CD4-positive, alpha-beta T cell (primary cell): ENCODE measurements at regions of chr1 and their contacts with region 1.

Region 1: DNA sequence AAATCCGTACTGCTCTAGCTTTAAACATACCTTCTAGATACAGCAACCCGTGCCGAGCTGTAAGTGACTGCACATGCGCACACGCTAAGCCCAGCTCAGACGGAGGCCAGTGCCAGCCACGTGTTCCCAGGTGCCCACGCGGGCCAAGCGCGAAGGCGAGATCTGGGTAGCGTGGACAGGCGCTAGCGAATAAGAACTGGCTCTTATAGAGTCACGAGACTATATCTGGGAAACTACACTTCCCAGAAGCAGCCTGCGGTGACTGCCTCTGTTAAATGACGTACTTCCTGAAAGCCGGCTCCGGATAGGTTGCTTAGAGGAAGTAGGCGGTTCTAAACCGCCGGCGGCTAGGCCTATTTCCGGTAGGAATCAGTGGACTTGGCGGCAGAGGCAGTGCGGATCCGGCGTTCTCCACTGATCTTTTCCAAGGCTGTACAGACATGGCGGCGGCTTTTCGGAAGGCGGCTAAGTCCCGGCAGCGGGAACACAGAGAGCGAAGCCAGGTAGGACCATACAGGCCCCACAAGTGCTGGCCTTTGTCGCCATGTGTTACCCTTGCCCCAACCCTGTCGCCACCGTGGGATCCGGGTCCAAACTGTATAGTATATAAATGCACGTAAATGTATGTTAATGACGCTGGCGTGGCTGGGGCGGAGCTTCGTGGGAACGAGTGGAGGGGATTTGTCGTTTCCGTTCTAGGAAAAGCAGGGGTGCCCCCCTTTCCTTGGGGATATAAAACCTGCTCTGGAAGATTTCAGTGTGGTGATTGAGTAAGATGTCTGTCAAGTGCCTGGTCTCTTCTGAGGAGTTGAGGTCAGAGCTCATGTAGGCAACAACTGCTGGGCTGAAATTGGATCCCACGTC is at the start of gene UTP11:
- DNase-seq: peak; percentile 80 to 97 (median 85)
- ATAC-seq: peak; percentile 94
- H3K4me3 ChIP-seq: peak within 1 kb of the TSS; percentile 86
- H3K4me3 Mint-ChIP-seq: peak within 1 kb of the TSS; percentile 99
- H3K27ac ChIP-seq: peak within 1 kb of the TSS; percentile 75 to 83
- H3K27ac Mint-ChIP-seq: peak within 1 kb of the TSS; percentile 97
- H3K4me1 ChIP-seq: peaks cover 47% of the 10 kb centered on the region
- H3K4me1 Mint-ChIP-seq: peaks cover 39% of the 10 kb centered on the region
- H3K27me3 ChIP-seq: no peaks in the 10 kb centered on the region
- H3K27me3 Mint-ChIP-seq: no peaks in the 10 kb centered on the region
- CTCF ChIP-seq: no peak
- total RNA-seq, gene UTP11: 8.7 to 9.4 TPM

Region 2: DNA sequence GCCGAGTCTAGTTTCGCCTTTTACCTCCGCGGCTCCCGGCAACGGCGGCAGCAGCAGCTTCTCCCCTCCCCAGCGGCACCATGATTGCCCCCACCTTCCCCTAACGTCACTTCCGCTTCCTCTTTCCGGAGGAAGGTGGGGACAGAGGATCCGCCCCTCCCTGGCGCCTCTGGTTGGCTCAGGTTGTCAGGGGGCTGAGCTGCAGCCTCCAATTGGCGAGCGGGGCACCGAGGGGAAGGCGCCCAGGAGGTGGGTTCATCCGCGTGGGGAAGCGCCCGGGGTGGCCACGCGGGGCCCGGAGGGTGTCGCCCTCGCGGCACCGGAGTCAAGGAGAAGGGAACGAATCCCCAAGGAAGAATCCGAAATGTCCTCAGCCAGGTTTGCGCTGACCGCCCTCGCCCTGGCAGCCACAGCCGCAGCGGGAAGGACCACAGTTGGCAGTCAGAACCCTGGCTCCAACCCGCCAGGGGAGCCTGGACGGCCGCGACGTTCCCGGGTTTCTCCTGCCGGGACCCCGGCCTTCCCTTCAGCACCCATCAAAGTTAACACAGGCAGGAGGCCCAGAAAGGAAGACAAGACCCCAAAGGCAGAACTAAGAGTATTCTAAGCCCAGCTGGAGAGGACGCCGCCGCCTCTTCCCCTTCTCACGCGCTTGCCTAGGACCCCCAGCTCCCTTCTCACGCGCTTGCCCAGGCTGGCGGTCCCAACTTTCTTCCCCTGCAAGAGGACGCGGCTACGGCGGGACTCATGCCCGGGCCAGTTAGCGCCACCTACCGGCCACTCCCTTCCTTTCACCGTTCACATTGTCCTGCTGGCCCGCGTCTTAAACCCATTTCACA is 152.9 kb before region 1 on chr1 and contains the start of gene MTF1:
- CTCF ChIA-PET with region 1: no interaction called
- POLR2A ChIA-PET with region 1: interaction called, 5 read pairs
- intact Hi-C with region 1: loop called in 1 of 2 experiments (anchors 2 kb)
- DNase-seq: peak; percentile 91 to 99 (median 95)
- ATAC-seq: peak; percentile 98
- H3K4me3 ChIP-seq: peak within 1 kb of the TSS; percentile 88
- H3K4me3 Mint-ChIP-seq: peak within 1 kb of the TSS; percentile 98
- H3K27ac ChIP-seq: peak within 1 kb of the TSS; percentile 81 to 91
- H3K27ac Mint-ChIP-seq: peak within 1 kb of the TSS; percentile 87
- H3K4me1 ChIP-seq: peaks cover 18% of the 10 kb centered on the region
- H3K4me1 Mint-ChIP-seq: peaks cover 41% of the 10 kb centered on the region
- H3K27me3 ChIP-seq: no peaks in the 10 kb centered on the region
- H3K27me3 Mint-ChIP-seq: no peaks in the 10 kb centered on the region
- CTCF ChIP-seq: peak; percentile 91
- total RNA-seq, gene MTF1: 28.1 to 31.2 TPM

Region 3: DNA sequence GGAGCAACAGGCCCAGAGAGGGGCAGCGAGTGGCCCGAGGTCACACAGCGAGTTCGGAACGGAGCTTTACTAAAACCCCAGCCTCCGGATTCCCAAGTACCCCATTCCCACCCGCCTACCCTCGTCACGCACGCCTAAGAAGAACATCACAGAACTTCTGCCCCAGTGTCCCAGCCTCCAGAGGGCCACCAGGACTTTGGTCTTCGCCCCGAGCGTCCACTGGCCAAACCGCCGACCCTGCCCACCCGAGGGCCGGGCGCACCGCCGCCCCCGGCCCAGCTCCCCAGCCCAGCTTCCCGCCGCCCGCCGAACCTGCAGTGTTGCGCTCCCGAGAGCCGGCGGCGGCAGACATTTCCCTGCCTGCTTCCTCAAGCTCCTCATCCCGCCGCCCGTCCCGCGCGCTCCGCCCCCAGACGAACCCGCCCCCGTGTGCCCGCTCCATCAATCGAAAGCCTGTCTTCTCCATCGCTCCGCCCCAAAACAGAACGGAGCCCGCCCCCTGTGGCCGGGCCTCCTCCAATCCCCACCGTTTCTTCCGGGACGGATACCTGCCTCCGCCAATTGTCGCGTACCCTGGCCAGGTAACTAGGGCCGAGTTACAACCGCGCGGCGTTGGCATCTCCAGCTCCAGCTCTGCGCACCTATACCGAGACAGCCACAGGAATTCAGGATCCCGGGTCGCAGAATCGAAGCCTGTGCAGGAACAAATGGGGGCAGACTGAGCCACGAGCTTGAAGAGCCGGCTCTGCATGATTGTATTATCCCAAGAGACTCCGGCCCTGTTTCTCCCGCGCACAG is 81.0 kb before region 1 on chr1:
- CTCF ChIA-PET with region 1: interaction called, 3 read pairs
- POLR2A ChIA-PET with region 1: no interaction called
- intact Hi-C with region 1: loop called in 1 of 2 experiments (anchors 5 kb)
- DNase-seq: peak; percentile 90 to 99 (median 97)
- ATAC-seq: peak; percentile 99
- H3K4me3 ChIP-seq: peak overlapping the region; percentile 93
- H3K4me3 Mint-ChIP-seq: peak overlapping the region; percentile 97
- H3K27ac ChIP-seq: peak overlapping the region; percentile 15 to 46
- H3K27ac Mint-ChIP-seq: peak overlapping the region; percentile 77
- H3K4me1 ChIP-seq: peaks cover 32% of the 10 kb centered on the region
- H3K4me1 Mint-ChIP-seq: peaks cover 38% of the 10 kb centered on the region
- H3K27me3 ChIP-seq: no peaks in the 10 kb centered on the region
- H3K27me3 Mint-ChIP-seq: no peaks in the 10 kb centered on the region
- CTCF ChIP-seq: no peak

Region 4: DNA sequence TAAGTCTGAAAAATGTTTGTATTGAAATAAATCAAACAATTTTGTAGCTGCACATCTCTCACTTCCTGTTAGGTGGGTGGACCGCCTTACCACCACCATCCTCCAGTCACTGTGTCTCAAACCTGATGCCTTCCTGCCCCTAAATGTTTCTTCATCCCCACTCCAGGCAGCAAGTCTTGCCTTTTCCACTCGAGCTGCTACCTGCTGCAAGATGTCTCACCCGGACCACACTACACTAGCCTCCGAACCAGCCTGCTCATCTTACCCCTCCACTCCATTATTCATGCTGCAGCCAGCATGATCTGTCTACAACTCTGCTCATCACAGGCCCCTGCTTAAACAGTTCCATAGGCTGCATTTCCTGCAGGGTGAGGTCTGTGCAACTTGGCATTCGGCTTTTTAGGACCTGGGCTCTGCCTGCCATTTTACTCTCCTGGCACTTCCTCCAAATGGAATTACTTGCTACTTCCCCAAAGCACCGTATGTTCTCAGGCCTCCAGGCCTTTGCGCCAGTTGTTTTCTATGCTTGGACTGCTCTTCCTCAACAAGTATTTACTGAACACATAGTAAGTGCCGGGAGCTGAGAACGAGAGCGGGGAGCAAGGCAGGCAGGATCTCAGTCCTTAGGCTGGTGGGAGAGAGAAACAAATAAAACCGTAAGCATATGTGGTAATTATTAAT is 17.6 kb before region 1 on chr1:
- CTCF ChIA-PET with region 1: interaction called, 16 read pairs
- POLR2A ChIA-PET with region 1: interaction called, 11 read pairs
- intact Hi-C with region 1: loop called (anchors 1 to 2 kb)
- DNase-seq: peak in 1 of 14 experiments; percentile 21
- ATAC-seq: no peak
- H3K4me3 ChIP-seq: no peak overlapping the region
- H3K4me3 Mint-ChIP-seq: peak overlapping the region; percentile 78
- H3K27ac ChIP-seq: peak overlapping the region; percentile 5 to 17
- H3K27ac Mint-ChIP-seq: peak overlapping the region; percentile 73
- H3K4me1 ChIP-seq: peaks cover 36% of the 10 kb centered on the region
- H3K4me1 Mint-ChIP-seq: peaks cover 23% of the 10 kb centered on the region
- H3K27me3 ChIP-seq: no peaks in the 10 kb centered on the region
- H3K27me3 Mint-ChIP-seq: no peaks in the 10 kb centered on the region
- CTCF ChIP-seq: no peak

Region 5: DNA sequence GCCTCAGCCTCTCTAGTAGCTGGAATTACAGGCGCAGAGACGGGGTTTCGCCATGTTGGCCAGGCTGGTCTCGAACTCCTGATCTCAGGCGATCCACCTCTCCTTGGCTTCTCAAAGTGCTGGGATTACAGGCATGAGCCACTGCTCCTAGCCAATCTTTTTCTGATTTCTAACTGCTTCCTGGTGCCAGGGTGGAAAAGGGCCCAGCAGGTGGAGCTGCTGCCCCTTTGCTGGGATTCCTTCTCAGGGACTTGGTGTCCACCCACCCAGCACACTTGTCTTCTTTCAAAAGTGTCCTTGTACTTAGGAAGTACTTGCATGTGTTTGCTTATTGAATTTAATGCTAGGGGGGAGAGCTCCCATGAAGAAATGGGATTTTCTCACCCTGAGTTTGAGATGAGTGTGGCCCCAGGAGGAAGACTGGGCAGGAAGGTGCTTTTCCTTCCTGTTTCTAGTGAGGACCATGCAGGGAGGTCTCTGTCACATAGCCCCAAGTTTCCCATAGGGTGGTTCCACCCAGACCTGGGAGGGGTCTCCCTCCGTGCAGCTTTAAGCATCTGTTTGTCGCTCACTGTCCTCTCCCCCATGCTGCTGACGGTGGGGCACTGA is 14.1 kb after region 1 on chr1:
- CTCF ChIA-PET with region 1: no interaction called
- POLR2A ChIA-PET with region 1: no interaction called
- intact Hi-C with region 1: no loop called
- DNase-seq: peak in 5 of 14 experiments; percentile 20 to 55 (median 50)
- ATAC-seq: no peak
- H3K4me3 ChIP-seq: no peak overlapping the region
- H3K4me3 Mint-ChIP-seq: no peak overlapping the region
- H3K27ac ChIP-seq: no peak overlapping the region
- H3K27ac Mint-ChIP-seq: no peak overlapping the region
- H3K4me1 ChIP-seq: peaks cover 42% of the 10 kb centered on the region
- H3K4me1 Mint-ChIP-seq: peaks cover 32% of the 10 kb centered on the region
- H3K27me3 ChIP-seq: no peaks in the 10 kb centered on the region
- H3K27me3 Mint-ChIP-seq: no peaks in the 10 kb centered on the region
- CTCF ChIP-seq: peak; percentile 19